ENCODE measurements at regions of chr11 and their contacts with region 1.

Region 1: GRCh38 chr11:8682303-8683114 is at the starts of genes RPL27A and TRIM66:
- DNase-seq: peak; percentile 99 to 100
- ATAC-seq: peak; percentile 99
- H3K4me3 ChIP-seq: peak within 1 kb of the TSS; percentile 70 to 71
- H3K27ac ChIP-seq: peak within 1 kb of the TSS; percentile 35 to 83
- H3K4me1 ChIP-seq: no peaks in the 10 kb centered on the region
- H3K27me3 ChIP-seq: no peaks in the 10 kb centered on the region
- total RNA-seq, gene RPL27A: 623 to 776 TPM
- total RNA-seq, gene TRIM66: 9.4 to 18.7 TPM

Region 2: DNA sequence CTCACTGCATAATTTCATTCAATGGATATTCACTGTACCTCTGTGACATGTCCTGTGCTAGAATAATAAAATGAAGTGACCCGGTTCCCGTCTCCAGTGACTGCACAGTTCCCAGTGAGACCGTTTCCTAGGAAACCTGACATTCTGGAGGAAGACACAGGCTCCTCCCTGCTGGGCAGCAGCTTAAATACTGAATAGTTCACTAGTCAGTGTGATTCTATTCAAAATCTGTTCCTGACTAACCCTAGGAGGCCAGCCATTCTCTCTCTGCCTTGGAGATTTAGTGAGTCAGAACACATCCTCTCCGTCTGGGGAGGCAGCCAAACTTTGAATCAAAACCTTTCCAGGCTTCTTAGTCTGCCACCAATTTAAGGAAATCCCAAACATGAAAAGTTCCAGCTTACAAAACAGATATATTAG is 11.3 kb before region 1 on chr11:
- intact Hi-C with region 1: loop called in 1 of 2 experiments (anchors 1 kb)
- DNase-seq: peak in 1 of 2 donors; percentile 72
- ATAC-seq: peak; percentile 93
- H3K4me3 ChIP-seq: no peak overlapping the region
- H3K27ac ChIP-seq: peak overlapping the region in 1 of 2 donors; percentile 62
- H3K4me1 ChIP-seq: peaks cover 0 to 3% of the 10 kb centered on the region in 2 donors
- H3K27me3 ChIP-seq: no peaks in the 10 kb centered on the region

Region 3: GRCh38 chr11:8813658-8814057 is 131.1 kb after region 1 on chr11:
- intact Hi-C with region 1: loop called (anchors 2 to 5 kb)
- DNase-seq: peak; percentile 84 to 91
- ATAC-seq: peak; percentile 78
- H3K4me3 ChIP-seq: no peak overlapping the region
- H3K27ac ChIP-seq: no peak overlapping the region
- H3K4me1 ChIP-seq: no peaks in the 10 kb centered on the region
- H3K27me3 ChIP-seq: no peaks in the 10 kb centered on the region

Region 4: DNA sequence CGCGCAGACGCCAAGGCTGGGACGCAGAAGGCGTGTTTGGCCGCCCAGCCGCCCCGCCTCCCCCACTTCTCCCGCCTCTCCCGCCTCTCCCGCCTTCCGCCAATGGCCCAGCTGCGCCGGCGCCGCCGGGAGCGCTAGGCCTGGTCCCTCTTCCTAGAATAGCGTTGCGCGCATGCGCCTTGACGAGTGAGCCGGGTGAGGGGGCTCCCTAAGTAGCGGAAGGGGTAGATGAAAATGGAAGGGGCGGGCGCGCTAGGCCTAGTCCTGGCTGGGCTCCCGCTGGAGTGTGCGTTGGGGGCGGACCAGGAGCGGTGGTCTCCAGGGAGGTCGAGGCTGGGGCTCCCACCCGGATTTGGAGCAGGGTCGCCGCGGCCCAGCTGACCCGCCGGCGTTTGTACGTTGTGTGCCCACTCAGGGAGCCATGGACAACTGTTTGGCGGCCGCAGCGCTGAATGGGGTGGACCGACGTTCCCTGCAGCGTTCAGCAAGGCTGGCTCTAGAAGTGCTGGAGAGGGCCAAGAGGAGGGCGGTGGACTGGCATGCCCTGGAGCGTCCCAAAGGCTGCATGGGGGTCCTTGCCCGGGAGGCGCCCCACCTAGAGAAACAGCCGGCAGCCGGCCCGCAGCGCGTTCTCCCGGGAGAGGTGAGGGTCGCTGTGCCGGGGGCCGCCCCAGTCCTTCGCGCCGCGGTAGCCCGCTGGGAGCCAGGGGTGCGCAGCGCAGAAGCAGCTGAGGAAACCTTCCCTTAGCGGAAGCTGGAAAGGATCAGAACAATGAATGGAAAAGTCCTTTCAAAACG is 228.7 kb after region 1 on chr11 and contains the start of gene AKIP1:
- intact Hi-C with region 1: loop called in 1 of 2 experiments (anchors 5 kb)
- DNase-seq: peak; percentile 98 to 99
- ATAC-seq: peak; percentile 98
- H3K4me3 ChIP-seq: peak within 1 kb of the TSS; percentile 43 to 52
- H3K27ac ChIP-seq: peak within 1 kb of the TSS; percentile 43 to 92
- H3K4me1 ChIP-seq: peaks cover 0 to 5% of the 10 kb centered on the region in 2 donors
- H3K27me3 ChIP-seq: no peaks in the 10 kb centered on the region
- total RNA-seq, gene AKIP1: 15.6 to 25.3 TPM

Measured in aorta (tissue), 5 donors.